ENCODE measurements at regions of chr5 and their contacts with region 1.

Region 1: DNA sequence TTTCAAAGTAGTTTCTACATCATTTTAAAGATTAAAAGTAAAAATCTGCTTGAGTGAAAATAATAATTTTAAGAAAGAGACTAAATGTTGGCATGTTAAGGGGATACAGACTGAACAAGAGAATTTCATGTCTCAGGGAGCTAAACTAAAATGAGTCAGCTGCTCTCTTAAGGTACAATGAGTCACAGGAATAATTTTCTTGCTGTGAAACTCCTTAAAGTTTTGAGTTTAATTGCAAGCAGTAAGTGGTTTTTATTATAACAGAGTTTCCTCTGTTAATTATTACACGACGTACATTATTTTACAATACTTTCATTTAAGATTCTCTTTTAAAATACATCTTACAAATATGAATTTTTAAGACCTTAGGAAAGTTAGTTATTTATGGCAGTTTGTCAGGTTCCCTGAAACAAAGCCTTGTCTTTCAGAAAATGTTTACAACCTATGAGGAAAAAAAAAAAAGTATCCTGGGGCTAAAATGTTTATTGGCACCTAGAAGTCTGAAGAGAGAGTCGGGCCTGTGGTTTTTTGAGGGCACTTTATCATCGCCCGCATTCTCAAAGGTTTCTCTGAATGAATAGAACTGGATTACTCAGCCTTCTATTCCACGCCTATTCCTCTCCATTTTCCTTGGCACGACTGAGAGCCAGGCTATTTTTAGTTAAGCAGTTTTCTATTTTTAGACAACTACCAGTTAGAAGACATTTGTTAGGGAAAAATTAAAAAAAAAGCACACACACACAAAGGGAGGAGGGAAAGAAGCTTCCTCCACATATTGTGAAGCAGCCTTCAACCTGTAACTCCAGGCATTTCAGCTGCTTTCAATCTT is 97.4 kb downstream of the MEF2C start:
- DNase-seq: peak; percentile 10
- H3K4me3 ChIP-seq: no peak overlapping the region
- H3K27ac ChIP-seq: peak overlapping the region; percentile 16 to 22
- H3K4me1 ChIP-seq: no peaks in the 10 kb centered on the region
- H3K27me3 ChIP-seq: no peaks in the 10 kb centered on the region
- CTCF ChIP-seq: no peak
- POLR2A ChIP-seq: no peak

Region 2: GRCh38 chr5:87137283-87137682 is 1648.3 kb before region 1 on chr5:
- intact Hi-C with region 1: no loop called
- DNase-seq: no peak
- H3K4me3 ChIP-seq: no peak overlapping the region
- H3K27ac ChIP-seq: no peak overlapping the region
- H3K4me1 ChIP-seq: no peaks in the 10 kb centered on the region
- H3K27me3 ChIP-seq: no peaks in the 10 kb centered on the region
- CTCF ChIP-seq: no peak
- POLR2A ChIP-seq: no peak

Region 3: GRCh38 chr5:88833371-88834130 is 47.9 kb after region 1 on chr5:
- intact Hi-C with region 1: loop called (anchors 5 kb)
- DNase-seq: no peak
- H3K4me3 ChIP-seq: no peak overlapping the region
- H3K27ac ChIP-seq: peak overlapping the region in 1 of 2 donors; percentile 23
- H3K4me1 ChIP-seq: no peaks in the 10 kb centered on the region
- H3K27me3 ChIP-seq: no peaks in the 10 kb centered on the region
- CTCF ChIP-seq: no peak
- POLR2A ChIP-seq: no peak